WTC11 (cell line): ENCODE measurements at regions of chr10 and their contacts with region 1.

Region 1: DNA sequence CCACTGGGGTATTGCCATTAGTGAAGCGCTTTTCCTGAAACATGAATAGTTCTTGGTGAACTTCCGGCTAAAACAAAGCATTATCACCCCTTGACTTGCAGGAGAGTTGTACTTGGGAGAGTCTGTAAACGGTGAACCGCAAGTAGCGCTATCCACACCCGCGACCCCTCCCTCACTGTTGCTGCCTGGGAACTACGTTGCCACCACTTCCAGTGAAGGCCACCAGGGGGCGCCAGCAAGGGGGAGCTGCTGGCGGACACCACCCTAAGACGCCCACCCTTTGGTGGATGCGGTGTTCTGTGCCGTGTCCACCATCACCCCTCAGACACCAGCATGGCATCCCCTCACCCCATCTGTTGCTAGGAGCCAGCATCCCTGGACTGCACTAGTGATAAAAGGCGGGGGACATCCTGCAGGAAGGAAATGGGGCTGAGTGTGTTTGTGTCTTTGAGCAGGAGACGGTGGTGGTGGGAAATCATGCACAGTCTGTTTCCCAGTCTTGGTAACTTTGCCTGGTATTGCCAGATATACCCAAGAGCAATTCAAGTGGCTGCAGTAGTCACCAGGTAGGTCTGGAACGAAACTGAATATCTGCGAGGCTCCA is 298.2 kb downstream of the FRMD4A start:
- DNase-seq: peak; percentile 90
- ATAC-seq: peak; percentile 97
- H3K4me3 Mint-ChIP-seq: no peak overlapping the region
- H3K27ac Mint-ChIP-seq: no peak overlapping the region
- H3K4me1 Mint-ChIP-seq: peaks cover 3% of the 10 kb centered on the region
- H3K27me3 Mint-ChIP-seq: no peaks in the 10 kb centered on the region
- CTCF ChIP-seq: peak; percentile 99

Region 2: DNA sequence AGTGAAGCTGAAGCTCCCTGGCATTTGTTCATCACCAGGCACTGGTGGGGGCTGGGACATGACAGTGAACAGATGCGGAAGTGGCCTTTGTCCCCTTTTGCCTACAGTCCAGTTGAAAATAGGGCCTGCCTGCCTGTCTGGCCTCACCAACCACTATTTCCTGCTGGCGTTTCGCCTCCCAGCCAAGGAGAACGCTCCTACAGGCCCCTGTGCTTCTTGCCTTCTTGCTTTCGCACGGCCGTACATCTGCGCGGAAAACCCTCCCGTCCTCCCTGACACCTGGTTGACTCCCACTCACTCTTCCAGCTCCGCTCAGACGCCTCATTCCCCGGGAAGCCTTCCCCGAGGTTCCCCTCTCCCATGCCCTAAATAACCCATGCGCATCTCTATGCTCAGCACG is 128.4 kb before region 1 on chr10:
- CTCF ChIA-PET with region 1: no interaction called
- POLR2A ChIA-PET with region 1: no interaction called
- DNase-seq: no peak
- ATAC-seq: peak; percentile 26
- H3K4me3 Mint-ChIP-seq: no peak overlapping the region
- H3K27ac Mint-ChIP-seq: no peak overlapping the region
- H3K4me1 Mint-ChIP-seq: peaks cover 9% of the 10 kb centered on the region
- H3K27me3 Mint-ChIP-seq: peaks cover 22% of the 10 kb centered on the region
- CTCF ChIP-seq: no peak

Region 3: GRCh38 chr10:14050598-14050997 is 18.1 kb after region 1 on chr10:
- CTCF ChIA-PET with region 1: no interaction called
- POLR2A ChIA-PET with region 1: no interaction called
- DNase-seq: no peak
- ATAC-seq: no peak
- H3K4me3 Mint-ChIP-seq: no peak overlapping the region
- H3K27ac Mint-ChIP-seq: no peak overlapping the region
- H3K4me1 Mint-ChIP-seq: no peaks in the 10 kb centered on the region
- H3K27me3 Mint-ChIP-seq: no peaks in the 10 kb centered on the region
- CTCF ChIP-seq: no peak

Region 4: DNA sequence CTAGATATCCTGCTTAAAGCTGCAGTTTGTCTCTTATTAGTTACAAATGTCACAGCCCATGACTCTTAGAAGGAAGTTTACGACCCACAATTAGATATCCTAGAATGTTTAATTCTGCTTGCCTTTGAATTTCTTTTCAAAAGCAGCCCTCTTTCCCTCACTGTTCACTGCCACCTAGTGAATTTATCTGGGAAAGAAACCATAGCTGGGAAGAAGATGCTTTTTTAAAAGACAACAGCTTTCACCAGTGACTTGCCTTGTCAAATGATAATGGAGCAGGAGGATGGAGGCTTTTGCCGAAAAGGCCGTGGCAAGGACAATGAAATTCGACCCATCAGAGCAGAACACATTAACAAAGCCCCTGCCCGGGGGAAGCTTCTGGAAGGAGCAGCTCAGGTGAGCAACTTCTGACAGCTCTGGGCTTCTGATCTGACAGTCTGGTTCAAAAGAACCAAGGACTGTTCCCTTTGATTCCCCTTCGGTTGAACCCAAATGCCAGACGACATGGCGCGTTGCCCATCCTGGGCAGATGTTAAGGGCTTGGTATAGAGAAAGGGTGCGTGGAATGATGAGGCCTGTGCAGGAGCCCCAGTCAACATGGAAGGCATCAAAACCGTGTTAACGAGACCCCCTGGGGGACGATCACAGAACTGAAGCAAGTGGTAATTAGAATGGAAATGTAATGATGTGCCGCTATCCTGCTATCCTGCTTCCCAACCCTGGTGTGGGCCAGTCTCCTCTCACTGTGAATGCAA is 61.4 kb after region 1 on chr10:
- CTCF ChIA-PET with region 1: interaction called, 10 read pairs
- POLR2A ChIA-PET with region 1: no interaction called
- DNase-seq: peak; percentile 63
- ATAC-seq: peak; percentile 78
- H3K4me3 Mint-ChIP-seq: no peak overlapping the region
- H3K27ac Mint-ChIP-seq: no peak overlapping the region; the same call in 1 of the 2 replicates
- H3K4me1 Mint-ChIP-seq: peaks cover 40% of the 10 kb centered on the region
- H3K27me3 Mint-ChIP-seq: no peaks in the 10 kb centered on the region
- CTCF ChIP-seq: no peak